Esophagus muscularis mucosa (tissue), 4 donors: ENCODE measurements at regions of chr5 and their contacts with region 1.

Region 1: DNA sequence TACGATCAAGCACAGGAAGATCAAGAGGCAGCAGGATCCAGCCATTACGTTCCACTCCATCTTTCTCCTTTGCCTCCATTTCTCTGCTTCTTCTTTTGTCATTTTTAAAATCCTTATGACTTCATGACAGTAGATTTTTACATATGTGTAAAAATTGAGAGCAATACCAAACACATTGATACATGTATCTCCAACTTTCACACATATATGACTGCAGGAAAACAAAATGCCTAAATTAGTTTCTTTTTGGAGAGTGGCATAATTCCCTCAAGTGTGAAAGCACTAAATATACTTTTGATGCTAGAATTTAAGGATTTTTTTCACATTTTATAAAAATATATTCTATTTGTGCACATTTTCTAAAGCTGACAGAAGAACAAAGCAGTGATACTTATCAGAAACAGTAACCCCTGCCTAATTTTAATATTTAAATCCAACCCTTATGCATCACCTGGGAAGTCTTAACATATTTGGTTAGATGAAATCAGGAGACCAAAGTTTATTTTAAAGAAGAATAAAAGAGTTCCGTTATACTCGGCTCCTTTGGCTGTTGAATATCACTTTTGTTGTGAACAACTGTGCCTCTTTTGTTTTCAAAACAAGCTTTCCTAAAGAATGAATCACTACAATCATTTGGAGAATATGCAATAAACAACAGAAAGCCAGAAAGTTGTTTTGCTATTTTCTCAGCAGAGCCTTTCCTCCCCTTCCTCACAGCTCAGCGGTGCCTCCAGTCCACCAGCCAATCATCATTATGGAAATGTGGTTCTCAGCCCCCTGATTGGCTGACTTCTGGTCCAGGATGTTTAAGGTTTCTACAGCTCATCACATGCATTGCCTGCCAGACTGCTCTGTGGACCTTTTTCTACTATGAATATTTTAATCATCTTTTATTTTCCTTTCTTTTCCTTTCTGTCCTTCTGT is 8.9 kb upstream of the ZNF608 start:
- DNase-seq: no peak
- H3K4me3 ChIP-seq: peak overlapping the region in 1 of 4 donors; percentile 9
- H3K27ac ChIP-seq: no peak overlapping the region
- H3K4me1 ChIP-seq: peaks cover 0 to 15% (median 2%) of the 10 kb centered on the region in 4 donors
- H3K27me3 ChIP-seq: no peaks in the 10 kb centered on the region
- CTCF ChIP-seq: no peak
- EP300 ChIP-seq: no peak
- POLR2A ChIP-seq: no peak

Region 2: DNA sequence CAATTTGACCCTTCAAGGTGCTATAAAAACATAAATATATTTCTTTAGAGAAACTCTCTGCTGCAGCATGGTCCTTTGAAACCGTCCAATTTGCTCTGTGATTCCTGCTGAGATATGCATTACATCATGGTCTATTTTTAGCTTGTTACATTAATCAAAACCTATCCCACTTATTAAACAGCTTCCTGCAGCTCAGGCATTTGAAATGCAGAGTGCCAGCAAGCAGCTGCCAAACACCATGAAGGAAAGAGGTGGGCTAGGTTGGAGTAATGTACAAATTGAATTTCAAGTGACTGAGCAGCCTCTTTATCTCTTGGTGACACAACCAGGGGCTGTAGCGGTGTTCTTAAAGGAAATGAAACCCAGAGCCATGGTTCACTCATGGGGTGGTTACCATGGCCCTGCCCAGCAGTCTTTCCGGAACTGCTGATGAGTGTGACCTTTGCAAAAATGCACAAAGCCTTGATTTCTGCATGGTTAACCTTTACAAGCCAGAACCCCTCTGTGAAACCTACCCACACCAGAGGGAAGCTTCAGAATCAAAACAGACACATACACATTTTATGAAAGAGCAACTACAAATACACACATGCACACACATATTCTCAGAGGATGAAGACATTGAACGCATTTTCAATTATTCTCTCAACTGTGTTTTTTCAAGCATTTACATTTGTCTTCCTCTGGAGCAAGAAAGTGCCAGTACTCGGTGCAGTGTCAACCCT is 147.0 kb after region 1 on chr5:
- intact Hi-C with region 1: loop called (anchors 10 kb)
- DNase-seq: no peak
- H3K4me3 ChIP-seq: no peak overlapping the region
- H3K27ac ChIP-seq: peak overlapping the region in 1 of 4 donors; percentile 8
- H3K4me1 ChIP-seq: peaks cover 30 to 46% (median 33%) of the 10 kb centered on the region in 4 donors
- H3K27me3 ChIP-seq: no peaks in the 10 kb centered on the region
- CTCF ChIP-seq: no peak
- EP300 ChIP-seq: no peak
- POLR2A ChIP-seq: no peak